ENCODE measurements at regions of chr15 and their contacts with region 1.

Region 1: DNA sequence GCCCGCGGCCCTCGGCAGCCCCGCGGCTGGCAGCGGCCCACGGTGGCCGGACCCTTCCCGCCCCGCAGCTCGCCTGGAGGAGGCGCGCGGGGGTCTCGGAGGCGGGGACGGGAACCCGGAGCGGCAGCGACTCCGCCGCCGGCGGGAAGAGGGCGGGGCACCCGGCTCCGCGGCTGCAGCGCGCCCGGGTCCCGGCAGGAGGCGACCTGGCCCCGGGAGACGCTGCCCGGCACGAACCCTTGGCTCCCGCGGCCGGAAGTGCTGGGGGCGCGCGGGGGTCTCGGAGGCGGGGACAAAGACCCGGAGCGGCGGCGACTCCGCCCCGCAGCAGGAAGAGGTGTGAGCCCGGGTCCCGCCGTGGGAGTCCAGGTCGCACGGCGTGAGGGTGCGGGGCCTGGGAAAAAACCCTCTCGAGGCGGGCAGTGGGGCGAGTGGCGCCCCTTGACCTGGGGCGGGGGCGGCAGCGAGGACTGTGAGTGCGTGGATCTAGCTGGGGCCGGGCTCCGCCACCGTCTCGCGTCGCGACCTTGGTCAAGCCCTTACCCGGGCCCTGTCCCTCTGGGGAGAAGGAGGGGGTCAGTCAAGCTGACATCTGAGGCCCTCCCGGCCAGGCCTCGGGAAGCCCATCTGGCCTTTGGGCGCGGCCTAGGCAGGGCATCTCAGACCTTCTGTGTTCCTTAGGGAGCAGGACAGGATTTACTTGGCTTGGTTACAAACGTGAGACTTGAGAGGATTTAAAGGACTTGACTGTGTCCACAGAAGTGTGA is at the start of gene CIB2:
- DNase-seq: peak; percentile 90
- H3K4me3 Mint-ChIP-seq: peak within 1 kb of the TSS; percentile 75
- H3K27ac Mint-ChIP-seq: peak within 1 kb of the TSS; percentile 76
- H3K4me1 Mint-ChIP-seq: peaks cover 36% of the 10 kb centered on the region
- H3K27me3 Mint-ChIP-seq: no peaks in the 10 kb centered on the region
- CTCF ChIP-seq: peak; percentile 88
- total RNA-seq, gene CIB2: 15.1 and 15.7 TPM in 2 replicates

Region 2: DNA sequence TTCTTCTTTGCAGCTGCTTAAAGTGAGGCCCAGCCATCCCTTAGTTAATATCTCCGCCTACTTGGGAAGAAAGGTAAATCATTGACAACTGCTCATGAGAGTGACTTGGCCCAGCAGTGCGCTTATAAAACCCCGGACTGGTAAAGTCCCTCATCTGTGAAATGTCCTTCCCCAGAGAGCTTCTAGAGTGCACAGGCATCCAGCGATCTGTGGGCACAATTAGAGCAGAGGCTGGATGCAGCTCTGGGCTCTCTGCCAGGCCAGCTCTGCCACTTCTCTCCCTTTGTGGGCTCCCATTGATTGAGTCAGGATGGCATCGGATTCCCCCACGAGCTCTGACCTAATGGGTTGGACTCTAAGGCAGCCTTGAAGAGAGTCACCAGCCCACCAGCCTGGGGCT is 279.8 kb before region 1 on chr15:
- CTCF ChIA-PET with region 1: no interaction called
- intact Hi-C with region 1: no loop called
- DNase-seq: no peak
- H3K4me3 Mint-ChIP-seq: no peak overlapping the region
- H3K27ac Mint-ChIP-seq: no peak overlapping the region
- H3K4me1 Mint-ChIP-seq: peaks cover 7% of the 10 kb centered on the region
- H3K27me3 Mint-ChIP-seq: peaks cover 100% of the 10 kb centered on the region
- CTCF ChIP-seq: no peak

Region 3: GRCh38 chr15:78149068-78149804 is 17.8 kb after region 1 on chr15 and contains the start of gene IDH3A:
- CTCF ChIA-PET with region 1: interaction called, 6 read pairs
- intact Hi-C with region 1: loop called (anchors 2 kb)
- DNase-seq: peak; percentile 100
- H3K4me3 Mint-ChIP-seq: peak within 1 kb of the TSS; percentile 92
- H3K27ac Mint-ChIP-seq: peak within 1 kb of the TSS; percentile 55
- H3K4me1 Mint-ChIP-seq: peaks cover 18% of the 10 kb centered on the region
- H3K27me3 Mint-ChIP-seq: no peaks in the 10 kb centered on the region
- CTCF ChIP-seq: no peak
- total RNA-seq, gene IDH3A: 96.1 and 111 TPM in 2 replicates

Region 4: GRCh38 chr15:78177447-78177873 is 46.0 kb after region 1 on chr15:
- CTCF ChIA-PET with region 1: interaction called, 3 read pairs
- intact Hi-C with region 1: loop called (anchors 5 kb)
- DNase-seq: peak; percentile 72
- H3K4me3 Mint-ChIP-seq: no peak overlapping the region
- H3K27ac Mint-ChIP-seq: no peak overlapping the region
- H3K4me1 Mint-ChIP-seq: no peaks in the 10 kb centered on the region
- H3K27me3 Mint-ChIP-seq: no peaks in the 10 kb centered on the region
- CTCF ChIP-seq: peak; percentile 93

Region 5: GRCh38 chr15:78195735-78196201 is 64.3 kb after region 1 on chr15:
- CTCF ChIA-PET with region 1: interaction called, 10 read pairs
- intact Hi-C with region 1: no loop called
- DNase-seq: peak; percentile 72
- H3K4me3 Mint-ChIP-seq: no peak overlapping the region
- H3K27ac Mint-ChIP-seq: no peak overlapping the region
- H3K4me1 Mint-ChIP-seq: no peaks in the 10 kb centered on the region
- H3K27me3 Mint-ChIP-seq: peaks cover 38% of the 10 kb centered on the region
- CTCF ChIP-seq: peak; percentile 90

Region 6: DNA sequence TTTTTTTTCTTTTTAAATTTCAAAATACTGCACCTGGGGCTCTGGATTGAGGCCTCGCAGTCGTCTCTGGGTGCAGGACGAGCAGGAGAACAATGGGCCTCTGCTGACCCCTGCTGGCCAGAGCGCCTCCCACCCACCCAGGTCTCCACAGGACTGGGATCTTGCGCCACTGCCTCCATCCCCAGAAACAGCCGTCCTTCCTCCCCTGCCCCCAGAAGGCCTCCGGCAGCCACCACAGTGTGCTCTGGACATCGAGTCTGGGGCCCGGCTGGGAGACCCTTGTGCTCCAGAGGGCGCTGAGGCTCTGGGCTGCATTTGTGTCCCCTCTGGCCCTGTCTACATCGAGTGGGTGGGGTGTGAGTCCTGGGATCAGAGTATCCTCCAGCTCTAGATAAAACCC is 109.5 kb after region 1 on chr15:
- CTCF ChIA-PET with region 1: interaction called, 5 read pairs
- intact Hi-C with region 1: loop called (anchors 5 kb)
- DNase-seq: peak; percentile 95
- H3K4me3 Mint-ChIP-seq: no peak overlapping the region
- H3K27ac Mint-ChIP-seq: no peak overlapping the region
- H3K4me1 Mint-ChIP-seq: peaks cover 9% of the 10 kb centered on the region
- H3K27me3 Mint-ChIP-seq: peaks cover 19% of the 10 kb centered on the region
- CTCF ChIP-seq: peak; percentile 92

Measured in Calu3 (cell line).